ENCODE measurements at regions of chr10 and their contacts with region 1.

Region 1: DNA sequence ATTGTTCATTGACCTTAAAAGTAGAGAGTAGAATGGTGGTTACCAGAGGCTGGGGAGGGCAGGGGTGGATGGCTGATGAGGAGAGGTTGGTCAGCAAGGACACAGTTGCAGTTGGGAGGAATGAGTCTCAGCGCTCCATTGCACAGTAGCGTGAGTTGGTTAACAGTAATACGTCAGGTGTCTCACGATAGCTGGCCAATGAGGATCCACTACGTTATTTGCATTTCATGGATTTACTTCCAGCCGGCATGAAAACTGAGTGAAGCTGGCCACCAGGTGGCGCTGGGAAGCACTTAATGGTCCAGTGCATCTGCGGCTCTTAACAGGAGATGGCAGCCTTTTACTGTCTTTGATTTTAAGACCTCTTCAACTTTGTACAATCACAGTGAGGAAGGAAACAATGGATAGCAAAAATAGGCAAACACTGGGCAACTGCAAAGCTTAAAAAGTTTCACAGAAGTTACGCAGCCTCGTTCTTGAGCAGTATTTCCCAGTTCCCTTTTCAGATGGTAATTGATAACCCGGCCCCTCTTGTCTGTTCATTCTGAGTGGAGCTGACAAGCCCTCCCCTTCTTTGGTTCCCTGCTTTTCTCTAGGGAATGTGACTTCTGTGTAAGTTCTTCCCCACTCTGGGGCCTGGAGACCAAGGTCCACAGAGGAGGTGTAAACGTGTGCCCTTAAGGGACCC is 23.7 kb downstream of the AKR1E2 start:
- DNase-seq: peak; percentile 94
- ATAC-seq: peak; percentile 97
- H3K4me3 Mint-ChIP-seq: no peak overlapping the region
- H3K27ac Mint-ChIP-seq: no peak overlapping the region
- H3K4me1 Mint-ChIP-seq: peaks cover 3% of the 10 kb centered on the region
- H3K27me3 Mint-ChIP-seq: no peaks in the 10 kb centered on the region
- CTCF ChIP-seq: peak; percentile 96

Region 2: DNA sequence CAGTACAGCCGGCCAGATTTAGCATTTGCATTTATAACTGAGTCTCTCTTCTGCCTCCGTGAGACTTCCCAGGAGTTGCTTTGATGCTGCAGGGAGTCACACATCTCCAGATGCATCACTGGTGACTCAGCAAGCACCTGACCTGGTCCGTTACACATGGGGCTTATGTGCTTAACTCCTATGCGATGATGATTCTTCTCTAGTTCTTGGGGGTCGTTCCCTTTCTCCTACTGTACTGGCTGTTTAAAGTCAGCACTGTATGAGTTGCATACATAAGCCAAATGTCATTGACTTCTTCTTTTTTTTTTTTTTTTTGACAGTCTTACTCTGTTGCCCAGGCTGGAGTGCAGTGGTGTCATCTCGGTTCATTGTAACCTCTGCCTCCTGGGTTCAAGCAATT is 36.7 kb before region 1 on chr10:
- CTCF ChIA-PET with region 1: interaction called, 47 read pairs
- POLR2A ChIA-PET with region 1: no interaction called
- intact Hi-C with region 1: no loop called
- DNase-seq: no peak
- ATAC-seq: no peak
- H3K4me3 Mint-ChIP-seq: no peak overlapping the region
- H3K27ac Mint-ChIP-seq: no peak overlapping the region
- H3K4me1 Mint-ChIP-seq: no peaks in the 10 kb centered on the region
- H3K27me3 Mint-ChIP-seq: peaks cover 8% of the 10 kb centered on the region
- CTCF ChIP-seq: no peak

Region 3: DNA sequence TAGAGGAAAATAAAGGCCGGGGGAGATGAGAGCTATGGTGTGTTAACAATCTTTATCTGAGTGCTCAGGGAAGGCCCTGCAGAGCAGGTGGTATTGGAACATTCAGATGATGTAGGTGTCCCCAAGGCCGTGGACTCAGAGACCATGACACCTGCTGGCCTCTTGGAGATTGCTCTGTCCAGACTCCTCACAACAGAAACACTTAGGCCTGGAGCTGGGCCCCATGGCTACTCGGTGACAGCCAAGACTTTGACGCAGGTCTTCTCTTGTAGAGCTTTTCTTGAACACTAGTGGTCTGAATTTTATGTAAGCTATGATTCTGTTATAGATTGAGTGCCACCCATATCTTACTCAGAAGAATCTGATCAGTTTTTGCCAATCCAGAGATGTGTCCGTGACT is 10.3 kb before region 1 on chr10:
- CTCF ChIA-PET with region 1: interaction called, 90 read pairs
- POLR2A ChIA-PET with region 1: no interaction called
- intact Hi-C with region 1: no loop called
- DNase-seq: no peak
- ATAC-seq: no peak
- H3K4me3 Mint-ChIP-seq: no peak overlapping the region
- H3K27ac Mint-ChIP-seq: no peak overlapping the region
- H3K4me1 Mint-ChIP-seq: peaks cover 17% of the 10 kb centered on the region
- H3K27me3 Mint-ChIP-seq: peaks cover 2% of the 10 kb centered on the region
- CTCF ChIP-seq: no peak

Region 4: DNA sequence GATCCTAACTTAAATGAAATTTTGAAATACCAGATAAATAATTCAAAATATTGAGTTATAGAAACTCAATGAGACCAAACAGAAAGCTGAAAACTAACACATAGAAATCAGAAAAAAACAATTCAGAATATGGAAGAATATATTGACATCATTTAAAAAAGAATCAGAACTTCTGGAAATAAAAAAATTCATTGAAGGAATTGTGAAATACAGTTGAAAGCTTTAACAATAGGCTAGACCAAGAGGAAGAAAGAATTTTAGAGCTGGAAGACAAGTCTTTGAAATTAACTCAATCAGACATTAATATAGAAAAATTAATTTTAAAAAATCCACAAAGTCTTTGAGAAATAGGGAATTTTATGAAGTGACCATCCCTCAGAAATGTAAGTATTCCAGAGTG is 76.7 kb after region 1 on chr10:
- CTCF ChIA-PET with region 1: no interaction called
- POLR2A ChIA-PET with region 1: no interaction called
- intact Hi-C with region 1: no loop called
- DNase-seq: no peak
- ATAC-seq: no peak
- H3K4me3 Mint-ChIP-seq: no peak overlapping the region
- H3K27ac Mint-ChIP-seq: no peak overlapping the region
- H3K4me1 Mint-ChIP-seq: no peaks in the 10 kb centered on the region
- H3K27me3 Mint-ChIP-seq: no peaks in the 10 kb centered on the region
- CTCF ChIP-seq: no peak

Region 5: GRCh38 chr10:4981722-4982471 is 132.2 kb after region 1 on chr10:
- CTCF ChIA-PET with region 1: interaction called, 37 read pairs
- POLR2A ChIA-PET with region 1: no interaction called
- intact Hi-C with region 1: loop called (anchors 1 kb)
- DNase-seq: peak; percentile 9
- ATAC-seq: no peak
- H3K4me3 Mint-ChIP-seq: no peak overlapping the region
- H3K27ac Mint-ChIP-seq: no peak overlapping the region
- H3K4me1 Mint-ChIP-seq: peaks cover 3% of the 10 kb centered on the region
- H3K27me3 Mint-ChIP-seq: peaks cover 2% of the 10 kb centered on the region
- CTCF ChIP-seq: peak; percentile 33

Region 6: DNA sequence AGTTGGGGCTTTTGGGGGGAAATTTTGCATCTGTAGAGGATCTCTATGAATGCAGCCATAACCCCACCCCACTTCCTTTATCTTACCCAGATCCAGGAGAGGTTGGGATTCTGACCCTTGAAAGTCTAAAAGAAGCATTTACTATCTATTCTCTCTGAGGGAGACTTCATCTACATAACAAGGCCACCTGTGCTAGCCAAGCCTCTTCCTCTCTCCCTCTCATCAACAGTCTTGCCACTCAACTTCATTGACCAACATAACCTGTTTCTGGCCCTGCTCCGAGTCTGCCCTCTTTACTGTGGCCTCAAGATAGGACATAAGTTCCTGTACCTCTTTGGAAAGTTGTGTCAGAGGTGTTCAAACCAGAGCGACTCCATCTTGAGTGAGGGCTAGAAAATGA is 535.5 kb after region 1 on chr10:
- CTCF ChIA-PET with region 1: interaction called, 25 read pairs
- POLR2A ChIA-PET with region 1: no interaction called
- intact Hi-C with region 1: loop called (anchors 5 kb)
- DNase-seq: no peak
- ATAC-seq: no peak
- H3K4me3 Mint-ChIP-seq: no peak overlapping the region
- H3K27ac Mint-ChIP-seq: no peak overlapping the region
- H3K4me1 Mint-ChIP-seq: no peaks in the 10 kb centered on the region
- H3K27me3 Mint-ChIP-seq: peaks cover 3% of the 10 kb centered on the region
- CTCF ChIP-seq: no peak

Region 7: DNA sequence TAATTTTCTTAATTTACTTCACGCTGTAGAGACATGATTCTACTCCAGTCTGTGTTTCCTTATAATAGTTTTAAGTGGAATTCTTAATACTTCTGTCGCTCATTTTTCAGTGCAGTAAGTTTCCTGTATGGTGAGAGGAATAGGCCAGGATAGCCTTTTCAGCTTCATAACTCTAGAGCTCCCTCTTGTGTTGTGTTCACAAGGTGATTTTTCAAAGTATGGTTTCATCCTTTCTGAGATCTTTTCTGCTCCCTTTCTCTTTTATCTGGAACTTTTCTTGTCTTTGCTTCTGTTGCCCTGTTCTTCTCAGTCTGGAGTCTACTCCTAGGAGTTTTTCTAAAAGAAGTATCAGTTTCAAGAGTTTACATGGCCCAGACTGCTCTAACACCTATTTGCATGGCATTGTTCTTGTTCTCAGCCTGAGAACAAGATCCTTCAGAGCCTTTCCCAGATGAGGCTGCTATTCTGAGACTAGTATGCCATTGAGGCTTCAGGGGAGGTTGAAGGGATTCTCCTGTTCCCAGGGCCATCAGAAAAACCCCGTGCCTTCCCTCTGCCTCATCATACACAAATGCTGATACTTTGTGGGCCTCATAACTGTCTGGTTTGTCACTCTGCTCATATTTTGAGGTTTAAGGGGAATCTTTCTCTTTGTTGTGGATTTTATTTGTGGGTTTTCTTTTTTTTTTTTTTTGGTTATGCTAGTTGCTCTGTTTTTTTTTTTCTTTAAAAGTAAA is 584.5 kb after region 1 on chr10:
- CTCF ChIA-PET with region 1: interaction called, 32 read pairs
- POLR2A ChIA-PET with region 1: no interaction called
- intact Hi-C with region 1: no loop called
- DNase-seq: no peak
- ATAC-seq: peak; percentile 53
- H3K4me3 Mint-ChIP-seq: no peak overlapping the region
- H3K27ac Mint-ChIP-seq: no peak overlapping the region
- H3K4me1 Mint-ChIP-seq: peaks cover 11% of the 10 kb centered on the region
- H3K27me3 Mint-ChIP-seq: peaks cover 4% of the 10 kb centered on the region
- CTCF ChIP-seq: peak; percentile 89